Naive thymus-derived CD4-positive, alpha-beta T cell (primary cell): ENCODE measurements at regions of chr12 and their contacts with region 1.

Region 1: DNA sequence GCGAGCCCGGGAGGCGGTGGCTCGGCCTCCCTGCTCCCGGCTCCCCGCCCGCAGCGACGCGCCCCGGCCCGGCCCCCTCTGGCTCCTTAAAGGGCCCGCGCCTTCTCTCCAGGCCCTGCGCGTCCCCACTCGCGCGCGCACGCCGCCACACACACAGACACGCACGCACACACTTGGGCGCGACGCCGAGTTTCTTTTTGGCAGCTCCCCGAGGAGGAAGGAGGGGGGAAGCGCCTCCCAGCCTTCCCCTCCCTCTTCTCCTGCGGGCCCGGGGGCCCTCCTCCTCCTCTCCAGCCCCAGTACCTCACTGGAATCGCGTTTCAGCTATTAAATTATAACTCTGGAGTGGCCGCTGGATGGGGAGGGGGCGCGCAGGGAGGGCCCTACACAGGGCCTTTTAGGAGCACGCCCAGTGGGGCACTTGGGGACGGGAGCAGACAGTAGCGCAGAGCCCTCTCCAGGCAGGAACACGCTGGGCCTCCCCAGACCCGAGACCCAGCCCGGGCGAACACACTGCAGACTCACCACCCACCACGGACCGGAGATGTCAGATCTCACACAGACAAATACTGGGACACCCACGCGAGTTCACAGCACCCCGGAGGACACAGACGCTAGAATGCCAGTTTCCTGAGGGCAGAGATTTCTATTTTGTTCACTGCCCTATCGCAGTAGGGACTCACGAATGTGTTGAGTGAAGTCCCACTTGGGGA is 405 bp upstream of the NCOR2 start:
- DNase-seq: peak; percentile 70 to 85 (median 82)
- ATAC-seq: peak; percentile 87
- H3K4me3 ChIP-seq: peak overlapping the region; percentile 72
- H3K4me3 Mint-ChIP-seq: peak overlapping the region; percentile 78 to 92 (median 86)
- H3K27ac ChIP-seq: peak overlapping the region; percentile 58
- H3K27ac Mint-ChIP-seq: peak overlapping the region; percentile 59 to 88 (median 81)
- H3K4me1 ChIP-seq: peaks cover 6 to 15% of the 10 kb centered on the region in 2 donors
- H3K4me1 Mint-ChIP-seq: peaks cover 0 to 47% (median 25%) of the 10 kb centered on the region in 7 donors
- H3K27me3 ChIP-seq: no peaks in the 10 kb centered on the region
- H3K27me3 Mint-ChIP-seq: no peaks in the 10 kb centered on the region

Region 2: DNA sequence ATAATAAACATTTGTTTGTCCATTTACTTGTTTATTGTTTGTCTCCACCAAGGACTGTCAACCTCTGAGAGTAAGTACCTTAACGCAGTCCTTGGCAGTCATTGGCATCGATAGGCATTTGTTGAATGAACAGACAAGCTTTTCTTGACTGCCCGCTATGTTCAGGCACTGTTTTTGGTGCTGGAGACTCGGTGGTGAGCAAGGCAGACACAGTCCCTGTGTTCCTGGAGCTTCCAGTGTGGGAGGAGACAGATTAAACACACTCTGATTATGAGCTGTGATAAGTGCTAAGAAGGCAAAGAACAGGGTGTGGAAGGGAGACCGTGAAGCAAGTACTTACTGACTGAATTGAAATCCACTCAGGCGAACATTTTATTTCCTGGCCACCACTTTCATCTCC is 854.4 kb before region 1 on chr12:
- CTCF ChIA-PET with region 1: no interaction called
- POLR2A ChIA-PET with region 1: no interaction called
- intact Hi-C with region 1: loop called in 1 of 2 experiments (anchors 5 kb)
- DNase-seq: peak in 2 of 9 donors; percentile 7 to 41
- ATAC-seq: no peak
- H3K4me3 ChIP-seq: peak overlapping the region; percentile 95
- H3K4me3 Mint-ChIP-seq: peak overlapping the region; percentile 81 to 100 (median 90)
- H3K27ac ChIP-seq: peak overlapping the region; percentile 77
- H3K27ac Mint-ChIP-seq: peak overlapping the region; percentile 37 to 93 (median 79)
- H3K4me1 ChIP-seq: peaks cover 11 to 21% of the 10 kb centered on the region in 2 donors
- H3K4me1 Mint-ChIP-seq: peaks cover 28 to 42% (median 38%) of the 10 kb centered on the region in 7 donors
- H3K27me3 ChIP-seq: no peaks in the 10 kb centered on the region
- H3K27me3 Mint-ChIP-seq: no peaks in the 10 kb centered on the region

Region 3: GRCh38 chr12:124411281-124411878 is 156.4 kb before region 1 on chr12:
- CTCF ChIA-PET with region 1: no interaction called
- POLR2A ChIA-PET with region 1: no interaction called
- intact Hi-C with region 1: no loop called
- DNase-seq: no peak
- ATAC-seq: no peak
- H3K4me3 ChIP-seq: no peak overlapping the region
- H3K4me3 Mint-ChIP-seq: no peak overlapping the region
- H3K27ac ChIP-seq: no peak overlapping the region
- H3K27ac Mint-ChIP-seq: peak overlapping the region in 3 of 9 donors; percentile 19 to 50 (median 39)
- H3K4me1 ChIP-seq: no peaks in the 10 kb centered on the region
- H3K4me1 Mint-ChIP-seq: peaks cover 2 to 9% (median 5%) of the 10 kb centered on the region in 7 donors
- H3K27me3 ChIP-seq: no peaks in the 10 kb centered on the region
- H3K27me3 Mint-ChIP-seq: no peaks in the 10 kb centered on the region

Region 4: GRCh38 chr12:124545508-124546418 is 22.1 kb before region 1 on chr12:
- CTCF ChIA-PET with region 1: no interaction called
- POLR2A ChIA-PET with region 1: no interaction called
- intact Hi-C with region 1: loop called in 1 of 2 experiments (anchors 2 kb)
- DNase-seq: peak in 1 of 9 donors; percentile 57
- ATAC-seq: peak; percentile 78
- H3K4me3 ChIP-seq: peak overlapping the region; percentile 11
- H3K4me3 Mint-ChIP-seq: peak overlapping the region in 6 of 10 donors; percentile 6 to 57 (median 43)
- H3K27ac ChIP-seq: no peak overlapping the region
- H3K27ac Mint-ChIP-seq: peak overlapping the region in 2 of 9 donors; percentile 22 to 29
- H3K4me1 ChIP-seq: peaks cover 21 to 44% of the 10 kb centered on the region in 2 donors
- H3K4me1 Mint-ChIP-seq: peaks cover 30 to 80% (median 50%) of the 10 kb centered on the region in 7 donors
- H3K27me3 ChIP-seq: no peaks in the 10 kb centered on the region
- H3K27me3 Mint-ChIP-seq: no peaks in the 10 kb centered on the region

Region 5: DNA sequence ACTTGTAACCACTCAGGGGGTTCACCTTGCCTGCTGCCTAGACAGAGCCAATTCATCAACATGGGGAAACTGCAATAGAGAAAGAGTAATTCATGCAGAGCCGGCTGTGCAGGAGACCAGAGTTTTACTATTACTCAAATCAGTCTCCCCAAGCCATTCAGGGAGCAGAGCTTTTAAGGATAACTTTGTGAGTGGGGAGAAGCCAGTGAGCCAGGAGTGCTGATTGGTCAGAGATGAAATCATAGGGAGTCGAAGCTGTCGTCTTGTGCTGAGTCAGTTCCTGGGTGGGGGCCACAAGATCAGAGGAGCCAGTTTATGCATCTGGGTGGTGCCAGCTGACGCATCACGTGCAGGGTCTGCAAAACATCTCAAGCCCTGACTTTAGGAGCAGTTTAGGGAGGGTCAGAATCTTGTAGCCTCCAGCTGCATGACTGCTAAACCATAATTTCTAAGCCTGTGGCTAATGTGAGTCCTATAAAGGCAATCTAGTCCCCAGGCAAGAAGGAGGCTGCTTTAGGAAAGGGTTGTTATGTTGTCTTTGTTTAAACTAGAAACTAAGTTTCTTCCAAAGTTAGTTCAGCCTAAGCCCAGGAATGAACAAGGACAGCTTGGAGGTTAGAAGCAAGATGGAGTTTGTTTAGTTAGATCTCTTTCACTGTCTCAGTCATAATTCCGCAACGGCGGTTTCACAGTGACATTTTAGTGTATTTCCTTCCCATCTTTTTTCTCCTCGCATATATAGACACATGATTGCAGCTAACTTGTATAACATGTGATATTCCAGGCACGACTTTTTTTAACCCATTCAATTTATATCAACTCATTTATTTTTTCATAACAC is 68.5 kb after region 1 on chr12:
- CTCF ChIA-PET with region 1: no interaction called
- POLR2A ChIA-PET with region 1: no interaction called
- intact Hi-C with region 1: loop called in 1 of 2 experiments (anchors 2 kb)
- DNase-seq: peak in 5 of 9 donors; percentile 14 to 56 (median 45)
- ATAC-seq: peak; percentile 63
- H3K4me3 ChIP-seq: no peak overlapping the region
- H3K4me3 Mint-ChIP-seq: peak overlapping the region in 8 of 10 donors; percentile 5 to 69 (median 30)
- H3K27ac ChIP-seq: no peak overlapping the region
- H3K27ac Mint-ChIP-seq: peak overlapping the region in 2 of 9 donors; percentile 3 to 6
- H3K4me1 ChIP-seq: peaks cover 0 to 11% of the 10 kb centered on the region in 2 donors
- H3K4me1 Mint-ChIP-seq: peaks cover 9 to 12% (median 11%) of the 10 kb centered on the region in 7 donors
- H3K27me3 ChIP-seq: no peaks in the 10 kb centered on the region
- H3K27me3 Mint-ChIP-seq: peaks cover 0 to 2% (median 0%) of the 10 kb centered on the region in 5 donors

Region 6: DNA sequence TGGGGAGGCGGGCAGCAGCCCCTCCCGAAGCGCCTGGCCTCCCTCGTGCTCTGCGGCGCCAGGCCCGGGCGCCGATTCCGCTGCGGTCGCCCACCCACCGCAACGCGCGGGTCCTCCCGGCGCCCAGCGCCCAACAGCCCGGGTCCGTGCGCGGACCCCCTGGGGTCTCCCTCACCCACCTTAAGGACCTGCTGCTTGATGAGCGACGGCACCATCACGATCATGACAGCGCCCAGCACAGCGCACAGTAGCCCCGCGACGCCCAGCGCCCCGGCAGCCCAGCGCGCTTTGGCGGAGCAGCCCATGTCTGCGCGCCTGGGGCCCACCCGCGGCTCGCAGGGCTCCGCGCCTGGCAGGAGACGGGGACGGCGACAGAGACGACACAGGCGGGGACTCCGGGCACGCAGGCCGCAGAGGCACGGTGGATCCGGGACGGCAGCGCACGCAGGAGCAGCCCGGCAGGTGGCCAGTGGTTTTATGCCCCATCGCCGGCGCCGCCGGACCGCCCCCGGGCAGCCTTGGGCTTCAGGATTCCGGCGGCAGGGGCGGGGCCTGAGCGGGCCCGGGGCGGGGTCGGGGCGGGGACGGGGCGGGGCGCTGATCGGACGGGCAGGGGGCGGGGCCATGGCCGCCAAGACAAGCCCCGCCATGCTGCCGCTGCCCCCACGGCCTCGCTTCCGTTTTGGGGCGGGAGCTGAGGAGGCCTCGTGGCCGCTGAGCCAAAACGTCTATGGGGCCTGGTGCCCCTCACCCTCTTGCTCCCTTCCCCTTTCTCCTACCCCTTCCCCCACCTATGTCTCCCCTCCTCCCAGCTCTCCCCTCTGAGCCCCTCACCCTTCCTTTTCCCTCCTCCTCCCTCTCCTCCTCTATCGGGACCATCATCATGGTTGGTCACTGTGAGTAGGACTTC is 295.9 kb after region 1 on chr12 and contains the start of gene SCARB1:
- CTCF ChIA-PET with region 1: no interaction called
- POLR2A ChIA-PET with region 1: no interaction called
- intact Hi-C with region 1: loop called in 1 of 2 experiments (anchors 5 kb)
- DNase-seq: peak; percentile 60 to 84 (median 72)
- ATAC-seq: peak; percentile 95
- H3K4me3 ChIP-seq: peak within 1 kb of the TSS; percentile 74
- H3K4me3 Mint-ChIP-seq: peak within 1 kb of the TSS; percentile 70 to 94 (median 81)
- H3K27ac ChIP-seq: peak within 1 kb of the TSS; percentile 58
- H3K27ac Mint-ChIP-seq: peak within 1 kb of the TSS; percentile 66 to 94 (median 83)
- H3K4me1 ChIP-seq: no peaks in the 10 kb centered on the region
- H3K4me1 Mint-ChIP-seq: peaks cover 9 to 25% (median 14%) of the 10 kb centered on the region in 7 donors
- H3K27me3 ChIP-seq: no peaks in the 10 kb centered on the region
- H3K27me3 Mint-ChIP-seq: peaks cover 0 to 8% (median 3%) of the 10 kb centered on the region in 5 donors
- total RNA-seq, gene SCARB1: 2.5 to 7.1 (median 4.3) TPM

Region 7: DNA sequence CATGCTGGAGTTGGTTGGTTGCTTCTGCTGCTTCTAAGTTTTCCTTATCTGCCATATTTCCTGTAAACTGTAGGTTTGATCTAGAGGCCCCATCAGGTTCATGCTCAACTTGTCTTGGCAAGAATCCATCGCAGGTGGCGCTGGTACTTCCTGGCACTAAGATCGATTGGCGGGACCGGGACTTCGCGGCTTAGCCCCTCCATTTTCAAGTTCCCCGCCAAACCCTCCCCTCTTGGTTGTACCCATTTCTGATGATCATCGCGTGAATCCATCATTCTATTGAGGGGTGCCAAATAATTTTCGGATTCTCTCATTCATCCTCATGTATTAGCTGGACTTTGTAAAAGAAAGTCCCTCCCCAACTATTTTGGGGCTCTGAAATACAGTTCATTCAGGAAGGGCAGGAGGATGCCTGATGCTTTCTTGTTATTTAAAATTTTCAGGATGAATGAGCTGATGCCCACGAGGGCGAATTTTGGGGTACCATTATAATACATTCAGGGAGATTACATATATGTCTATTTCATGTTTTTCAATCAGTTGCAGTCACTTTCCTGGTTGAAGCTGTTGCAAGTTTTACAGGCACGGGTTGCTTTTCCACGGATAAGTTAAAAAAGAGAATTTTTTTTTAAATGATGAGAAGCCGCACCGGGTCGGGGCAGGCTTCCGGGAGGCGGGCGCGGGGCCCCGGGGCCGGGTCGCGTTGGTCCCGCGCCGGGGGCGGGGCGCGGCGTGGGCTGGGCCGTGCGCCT is 425.2 kb after region 1 on chr12:
- CTCF ChIA-PET with region 1: no interaction called
- POLR2A ChIA-PET with region 1: no interaction called
- intact Hi-C with region 1: loop called (anchors 1 to 2 kb)
- DNase-seq: peak; percentile 67 to 86 (median 81)
- ATAC-seq: peak; percentile 82
- H3K4me3 ChIP-seq: peak overlapping the region; percentile 67
- H3K4me3 Mint-ChIP-seq: peak overlapping the region; percentile 79 to 97 (median 86)
- H3K27ac ChIP-seq: peak overlapping the region; percentile 62
- H3K27ac Mint-ChIP-seq: peak overlapping the region; percentile 14 to 85 (median 80)
- H3K4me1 ChIP-seq: peaks cover 11 to 29% of the 10 kb centered on the region in 2 donors
- H3K4me1 Mint-ChIP-seq: peaks cover 25 to 42% (median 34%) of the 10 kb centered on the region in 7 donors
- H3K27me3 ChIP-seq: no peaks in the 10 kb centered on the region
- H3K27me3 Mint-ChIP-seq: no peaks in the 10 kb centered on the region